AG04449 (cell line): ENCODE measurements at regions of chr4 and their contacts with region 1.

Region 1: GRCh38 chr4:47485047-47485692 is at the start of gene ATP10D:
- DNase-seq: peak; percentile 63
- H3K4me3 ChIP-seq: peak within 1 kb of the TSS; percentile 66
- CTCF ChIP-seq: peak; percentile 49

Region 2: GRCh38 chr4:47471064-47471463 is 14.1 kb before region 1 on chr4:
- CTCF ChIA-PET with region 1: interaction called, 10 read pairs
- POLR2A ChIA-PET with region 1: interaction called, 5 read pairs
- DNase-seq: no peak
- H3K4me3 ChIP-seq: no peak overlapping the region
- CTCF ChIP-seq: no peak